Lower leg skin (tissue), 4 donors: ENCODE measurements at regions of chr10 and their contacts with region 1.

Region 1: GRCh38 chr10:114550756-114551635 is 107.1 kb downstream of the ABLIM1 start:
- DNase-seq: peak in 1 of 2 donors; percentile 49
- H3K4me3 ChIP-seq: no peak overlapping the region
- CTCF ChIP-seq: no peak
- POLR2A ChIP-seq: no peak

Region 2: GRCh38 chr10:114470956-114471905 is 79.8 kb before region 1 on chr10:
- intact Hi-C with region 1: loop called (anchors 5 kb)
- DNase-seq: peak in 1 of 2 donors; percentile 92
- H3K4me3 ChIP-seq: no peak overlapping the region
- CTCF ChIP-seq: peak in 2 of 3 donors; percentile 68 to 77
- POLR2A ChIP-seq: no peak

Region 3: GRCh38 chr10:114703377-114704107 is 152.5 kb after region 1 on chr10:
- intact Hi-C with region 1: loop called (anchors 10 kb)
- DNase-seq: no peak
- H3K4me3 ChIP-seq: no peak overlapping the region
- CTCF ChIP-seq: no peak
- POLR2A ChIP-seq: no peak

Region 4: DNA sequence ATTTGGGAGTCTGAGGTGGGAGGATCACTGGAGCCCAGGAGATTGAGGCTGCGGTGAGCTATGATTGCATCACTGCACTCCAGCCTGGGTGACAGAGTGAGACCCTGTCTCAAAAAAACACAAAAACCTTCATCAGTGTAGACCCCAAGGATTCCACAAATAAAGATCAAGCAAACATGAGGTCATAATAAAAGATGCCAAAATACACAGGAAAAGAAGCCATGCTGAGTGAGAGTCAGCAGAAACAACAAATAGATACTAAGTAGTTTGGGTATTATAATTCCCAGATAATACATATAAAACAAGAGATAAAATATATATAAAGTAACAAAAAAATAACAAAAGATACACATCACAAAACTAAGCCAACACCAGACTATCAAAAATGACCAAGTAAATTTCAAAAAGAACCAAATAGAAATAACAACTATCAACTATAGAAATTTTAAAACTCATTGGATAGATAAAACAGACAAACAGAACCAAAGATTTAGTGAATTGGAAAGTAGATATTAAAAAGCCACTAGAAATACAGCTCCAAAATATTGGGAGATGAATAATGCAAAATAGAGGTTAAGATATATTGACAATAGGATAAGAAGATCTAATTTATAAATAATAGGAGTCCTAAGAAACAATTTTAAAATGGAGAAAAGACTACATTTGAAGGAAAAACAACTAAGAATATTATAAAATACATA is 221.7 kb after region 1 on chr10:
- intact Hi-C with region 1: loop called (anchors 5 kb)
- DNase-seq: no peak
- H3K4me3 ChIP-seq: no peak overlapping the region
- CTCF ChIP-seq: no peak
- POLR2A ChIP-seq: no peak

Region 5: DNA sequence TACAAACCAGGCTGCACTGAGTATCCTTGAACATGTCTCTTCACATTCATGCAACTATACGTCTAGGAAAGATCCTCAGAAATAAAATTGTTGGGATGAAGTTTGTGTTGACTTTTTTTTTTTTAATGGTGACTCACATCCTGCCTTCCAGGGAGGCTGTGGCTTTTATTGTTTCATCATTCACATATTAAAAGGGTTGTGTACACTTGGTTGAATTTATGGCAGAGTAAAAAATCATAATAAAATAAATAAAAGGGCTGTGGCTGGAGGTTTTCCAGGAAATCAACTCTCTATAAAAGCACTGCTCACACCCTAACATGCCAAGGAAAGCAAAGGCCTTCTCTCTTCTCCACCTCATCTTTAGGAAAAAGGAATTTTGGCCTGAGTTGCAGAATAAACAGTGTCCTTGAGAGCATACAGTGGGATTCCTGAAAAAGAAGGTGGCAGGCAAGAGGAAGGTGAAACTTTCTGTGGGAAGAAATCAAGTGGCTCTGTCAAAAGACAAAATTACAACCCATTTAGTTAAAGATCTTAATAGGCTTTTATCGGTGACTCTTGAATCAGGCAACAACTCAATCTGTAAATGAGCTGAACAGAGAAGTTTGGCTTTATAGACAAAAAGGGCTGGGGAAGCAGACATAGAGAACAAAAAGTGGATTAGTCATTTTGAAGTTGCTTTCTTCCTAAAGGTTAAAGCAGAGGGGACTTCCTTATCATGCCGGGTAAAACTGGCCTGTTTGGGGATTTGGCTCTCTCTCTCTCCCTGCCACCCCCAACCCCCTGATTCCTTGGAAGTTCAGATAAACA is 229.0 kb after region 1 on chr10:
- intact Hi-C with region 1: loop called (anchors 5 kb)
- DNase-seq: no peak
- H3K4me3 ChIP-seq: no peak overlapping the region
- CTCF ChIP-seq: no peak
- POLR2A ChIP-seq: no peak